ENCODE measurements at regions of chr1 and their contacts with region 1.

Region 1: GRCh38 chr1:53393325-53393792 is 65.5 kb upstream of the LRP8 start:
- DNase-seq: peak; percentile 69
- H3K4me3 ChIP-seq: no peak overlapping the region
- H3K27ac ChIP-seq: no peak overlapping the region
- H3K4me1 ChIP-seq: peaks cover 16% of the 10 kb centered on the region
- CTCF ChIP-seq: peak; percentile 94

Region 2: DNA sequence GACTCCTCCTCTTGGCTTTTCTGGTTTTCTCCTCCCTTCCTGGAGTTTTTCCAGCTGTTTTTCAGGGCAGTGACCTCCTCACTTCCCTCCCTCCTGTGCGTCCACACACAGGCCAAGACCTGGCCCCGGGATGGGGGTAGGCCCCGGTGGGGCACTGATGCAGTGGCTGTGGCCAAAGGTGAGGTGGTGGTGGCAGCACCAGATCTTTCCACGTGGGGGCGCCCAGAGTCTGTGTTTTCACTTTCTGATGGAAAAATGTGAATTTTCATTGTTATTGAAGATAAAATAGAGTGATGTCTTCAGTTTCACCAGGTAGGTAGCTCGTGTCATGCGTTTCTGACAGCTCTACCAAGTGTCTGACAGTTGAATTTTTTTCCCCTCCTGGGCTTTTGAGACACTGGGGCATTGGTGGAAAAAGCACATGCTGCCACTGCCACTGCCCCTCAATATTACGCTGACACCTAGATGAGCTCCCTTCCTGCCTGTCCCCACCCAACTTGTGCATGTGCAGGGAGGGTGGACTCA is 115.1 kb before region 1 on chr1:
- CTCF ChIA-PET with region 1: no interaction called
- POLR2A ChIA-PET with region 1: no interaction called
- intact Hi-C with region 1: loop called (anchors 1 kb)
- DNase-seq: peak; percentile 57
- H3K4me3 ChIP-seq: no peak overlapping the region
- H3K27ac ChIP-seq: no peak overlapping the region
- H3K4me1 ChIP-seq: no peaks in the 10 kb centered on the region
- CTCF ChIP-seq: peak; percentile 94

Region 3: DNA sequence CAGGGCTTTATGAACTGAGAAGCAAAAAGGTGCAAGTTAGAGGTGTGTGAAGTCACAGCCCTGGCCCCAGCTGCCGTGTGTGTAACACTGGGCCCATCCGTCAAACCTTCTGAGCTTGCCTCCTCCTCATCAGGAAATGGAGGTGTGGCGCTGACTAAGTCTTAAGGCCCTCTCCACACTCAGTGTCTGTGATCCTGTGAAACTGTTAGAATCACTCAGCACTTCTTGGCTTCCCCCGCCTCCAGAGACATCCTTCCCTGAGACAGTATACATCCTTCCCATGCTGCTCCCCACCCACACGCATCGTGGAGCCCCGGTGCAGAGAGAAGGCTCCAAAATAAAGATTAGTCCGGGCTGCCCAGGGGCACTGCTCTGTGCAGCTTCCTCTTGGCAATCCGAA is 98.8 kb before region 1 on chr1:
- CTCF ChIA-PET with region 1: no interaction called
- POLR2A ChIA-PET with region 1: interaction called, 3 read pairs
- intact Hi-C with region 1: loop called (anchors 5 kb)
- DNase-seq: no peak
- H3K4me3 ChIP-seq: no peak overlapping the region
- H3K27ac ChIP-seq: no peak overlapping the region
- H3K4me1 ChIP-seq: peaks cover 22% of the 10 kb centered on the region
- CTCF ChIP-seq: no peak

Region 4: GRCh38 chr1:53669637-53670191 is 276.4 kb after region 1 on chr1:
- CTCF ChIA-PET with region 1: no interaction called
- POLR2A ChIA-PET with region 1: no interaction called
- intact Hi-C with region 1: no loop called
- DNase-seq: no peak
- H3K4me3 ChIP-seq: no peak overlapping the region
- H3K27ac ChIP-seq: no peak overlapping the region
- H3K4me1 ChIP-seq: no peaks in the 10 kb centered on the region
- CTCF ChIP-seq: no peak

Measured in OCI-LY7 (cell line).